Right cardiac atrium (tissue), 5 donors: ENCODE measurements at regions of chr10 and their contacts with region 1.

Region 1: DNA sequence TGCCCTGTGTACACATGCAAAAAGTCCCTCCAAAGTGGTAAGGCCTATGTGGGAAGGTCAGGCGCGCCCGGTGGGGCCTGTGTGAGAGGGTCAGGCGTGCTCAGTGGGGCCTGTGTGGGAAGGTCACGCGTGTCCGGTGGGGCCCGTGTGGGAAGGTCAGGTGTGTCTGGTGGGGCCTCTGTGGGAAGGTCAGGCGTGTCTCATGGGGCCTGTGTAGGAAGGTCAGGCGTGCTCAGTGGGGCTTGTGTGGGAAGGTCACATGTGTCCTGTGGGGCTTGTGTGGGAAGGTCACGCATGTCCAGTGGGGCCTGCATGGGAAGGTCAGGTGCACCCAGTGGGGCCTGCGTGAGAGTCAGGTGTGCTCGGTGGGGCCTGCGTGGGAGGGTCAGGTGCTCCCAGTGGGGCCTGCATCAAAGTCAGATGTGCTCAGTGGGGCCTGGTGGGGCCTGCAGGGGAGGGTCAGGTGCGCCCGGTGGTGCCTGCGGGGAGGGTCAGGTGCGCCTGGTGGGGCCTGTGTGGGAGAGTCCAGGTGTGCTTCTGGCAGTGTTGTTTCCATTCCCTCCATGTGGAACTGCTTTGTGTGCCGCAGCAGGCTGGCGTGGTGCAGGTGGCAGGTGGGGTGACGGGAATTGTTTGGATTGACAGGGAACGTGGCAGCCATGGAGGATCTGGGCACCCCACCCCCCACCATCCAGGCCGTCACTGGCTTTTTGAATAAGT is 15.4 kb downstream of the LRRC27 start:
- DNase-seq: peak in 1 of 3 donors; percentile 28
- ATAC-seq: peak in 1 of 2 donors; percentile 17
- H3K4me3 ChIP-seq: no peak overlapping the region
- H3K27ac ChIP-seq: no peak overlapping the region
- H3K4me1 ChIP-seq: no peaks in the 10 kb centered on the region
- H3K27me3 ChIP-seq: no peaks in the 10 kb centered on the region

Region 2: GRCh38 chr10:132229834-132230556 is 117.4 kb before region 1 on chr10:
- intact Hi-C with region 1: loop called in 2 of 4 experiments (anchors 2 kb)
- DNase-seq: peak in 2 of 3 donors; percentile 72 to 75
- ATAC-seq: peak; percentile 22 to 32
- H3K4me3 ChIP-seq: no peak overlapping the region
- H3K27ac ChIP-seq: no peak overlapping the region
- H3K4me1 ChIP-seq: no peaks in the 10 kb centered on the region
- H3K27me3 ChIP-seq: no peaks in the 10 kb centered on the region

Region 3: GRCh38 chr10:132307823-132308587 is 39.4 kb before region 1 on chr10 and contains the start of gene STK32C:
- intact Hi-C with region 1: loop called in 1 of 4 experiments (anchors 5 kb)
- DNase-seq: peak; percentile 93 to 97 (median 97)
- ATAC-seq: peak; percentile 97
- H3K4me3 ChIP-seq: peak within 1 kb of the TSS; percentile 88
- H3K27ac ChIP-seq: peak within 1 kb of the TSS; percentile 32
- H3K4me1 ChIP-seq: no peaks in the 10 kb centered on the region
- H3K27me3 ChIP-seq: no peaks in the 10 kb centered on the region
- total RNA-seq, gene STK32C: 5.7 to 7.3 (median 6.7) TPM